B cell (primary cell): ENCODE measurements at regions of chr16 and their contacts with region 1.

Region 1: GRCh38 chr16:2205104-2205966 is at the start of gene MLST8:
- DNase-seq: peak; percentile 98
- ATAC-seq: peak; percentile 90
- H3K4me3 ChIP-seq: peak within 1 kb of the TSS; percentile 73 to 94 (median 76)
- H3K4me3 Mint-ChIP-seq: peak within 1 kb of the TSS; percentile 87
- H3K27ac ChIP-seq: peak within 1 kb of the TSS; percentile 86 to 89
- H3K27ac Mint-ChIP-seq: peak within 1 kb of the TSS; percentile 94
- H3K4me1 ChIP-seq: peaks cover 12 to 22% of the 10 kb centered on the region in 2 donors
- H3K4me1 Mint-ChIP-seq: peaks cover 21% of the 10 kb centered on the region
- H3K27me3 ChIP-seq: no peaks in the 10 kb centered on the region
- H3K27me3 Mint-ChIP-seq: peaks cover 3% of the 10 kb centered on the region
- CTCF ChIP-seq: peak; percentile 32
- total RNA-seq, gene MLST8: 36.1 and 39.0 TPM in 2 replicates

Region 2: DNA sequence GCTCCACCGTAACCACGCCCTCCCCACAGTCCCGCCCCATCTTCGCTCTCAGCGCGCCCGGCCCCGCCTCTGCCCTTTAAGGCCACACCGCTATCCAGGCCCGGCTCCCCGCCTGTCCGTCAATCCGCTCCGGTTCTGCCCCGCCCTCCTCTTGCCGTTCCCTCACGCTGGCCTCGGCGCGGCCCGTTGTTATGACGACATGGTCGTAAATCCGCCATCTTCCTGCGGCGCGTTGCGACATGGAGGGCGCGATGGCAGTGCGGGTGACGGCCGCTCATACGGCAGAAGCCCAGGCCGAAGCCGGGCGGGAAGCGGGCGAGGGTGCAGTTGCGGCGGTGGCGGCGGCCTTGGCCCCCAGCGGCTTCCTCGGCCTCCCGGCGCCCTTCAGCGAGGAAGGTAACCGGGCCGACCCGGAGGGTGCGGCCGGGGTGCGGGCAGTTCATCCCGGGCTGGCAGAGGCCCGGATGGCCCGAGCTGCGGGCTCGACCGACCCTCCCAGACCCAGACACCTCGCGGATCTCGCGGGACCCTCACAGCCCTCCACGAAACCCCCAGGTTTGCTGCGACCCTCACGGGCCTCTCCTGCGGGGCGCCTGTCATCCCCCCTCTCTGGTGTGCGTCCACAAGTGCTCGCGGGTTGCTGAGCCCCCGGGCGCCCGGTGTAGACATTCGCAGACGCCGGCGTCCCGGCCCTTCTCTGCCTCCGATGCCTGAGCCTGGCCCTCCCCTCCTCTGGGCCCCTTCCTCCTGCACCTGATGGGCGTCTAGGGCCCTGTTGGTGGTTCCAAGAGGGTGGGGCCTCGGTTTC is 18.2 kb after region 1 on chr16 and contains the start of gene E4F1:
- CTCF ChIA-PET with region 1: no interaction called
- POLR2A ChIA-PET with region 1: interaction called, 6 read pairs
- intact Hi-C with region 1: loop called (anchors 1 kb)
- DNase-seq: peak; percentile 100
- ATAC-seq: peak; percentile 99
- H3K4me3 ChIP-seq: peak within 1 kb of the TSS; percentile 51 to 92 (median 82)
- H3K4me3 Mint-ChIP-seq: peak within 1 kb of the TSS; percentile 86
- H3K27ac ChIP-seq: peak within 1 kb of the TSS; percentile 47 to 85
- H3K27ac Mint-ChIP-seq: peak within 1 kb of the TSS; percentile 86
- H3K4me1 ChIP-seq: peaks cover 6 to 16% of the 10 kb centered on the region in 2 donors
- H3K4me1 Mint-ChIP-seq: peaks cover 25% of the 10 kb centered on the region
- H3K27me3 ChIP-seq: no peaks in the 10 kb centered on the region
- H3K27me3 Mint-ChIP-seq: no peaks in the 10 kb centered on the region
- CTCF ChIP-seq: no peak
- total RNA-seq, gene E4F1: 41.8 and 43.0 TPM in 2 replicates

Region 3: DNA sequence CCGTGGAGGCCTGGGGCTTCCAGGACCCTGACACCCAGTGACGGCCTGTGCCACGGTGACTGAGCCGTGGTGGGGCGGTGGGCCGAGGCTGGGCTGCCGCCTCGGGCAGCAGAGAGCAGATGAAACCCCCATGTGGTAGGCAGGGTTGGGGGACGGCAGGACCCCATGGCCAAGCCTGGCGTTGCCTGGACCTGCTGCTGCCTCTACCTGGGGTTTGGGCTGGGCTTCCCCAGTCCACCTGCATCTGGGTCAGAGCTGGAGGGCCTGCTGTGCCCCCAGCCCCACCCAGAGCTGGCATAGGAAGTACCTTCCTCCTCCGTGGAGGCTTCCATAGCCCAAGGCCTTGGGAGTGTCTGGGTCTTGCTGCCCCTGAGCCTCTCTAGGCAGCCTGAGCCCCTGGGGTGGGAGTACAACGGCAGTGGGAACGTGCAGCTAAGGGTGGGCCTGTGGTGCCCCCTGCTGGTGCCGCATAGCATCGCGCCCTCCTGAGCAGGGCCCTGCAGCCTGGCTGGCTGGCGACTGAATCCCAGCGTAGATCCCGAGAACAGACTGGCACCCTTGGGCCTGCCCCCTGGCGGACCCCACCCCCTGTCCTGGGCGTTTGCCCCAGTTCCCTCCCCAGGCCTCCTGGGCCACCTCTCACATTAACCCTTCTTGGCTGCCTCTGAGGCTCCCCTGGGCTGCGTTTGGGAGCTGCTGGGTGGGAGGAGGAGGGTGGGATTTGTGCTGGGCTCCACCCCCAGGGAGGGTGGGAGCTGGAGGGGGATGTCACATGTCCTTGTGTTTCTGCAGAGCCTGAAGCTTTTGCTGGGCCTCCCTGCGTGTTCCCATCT is 295.8 kb after region 1 on chr16:
- CTCF ChIA-PET with region 1: no interaction called
- POLR2A ChIA-PET with region 1: no interaction called
- intact Hi-C with region 1: no loop called
- DNase-seq: peak; percentile 86
- ATAC-seq: peak; percentile 97
- H3K4me3 ChIP-seq: no peak overlapping the region
- H3K4me3 Mint-ChIP-seq: no peak overlapping the region
- H3K27ac ChIP-seq: no peak overlapping the region
- H3K27ac Mint-ChIP-seq: no peak overlapping the region
- H3K4me1 ChIP-seq: peaks cover 0 to 8% of the 10 kb centered on the region in 2 donors
- H3K4me1 Mint-ChIP-seq: peaks cover 11% of the 10 kb centered on the region
- H3K27me3 ChIP-seq: no peaks in the 10 kb centered on the region
- H3K27me3 Mint-ChIP-seq: no peaks in the 10 kb centered on the region
- CTCF ChIP-seq: peak; percentile 99